H1 (cell line): ENCODE measurements at regions of chr3 and their contacts with region 1.

Region 1: GRCh38 chr3:38101811-38102443 is 35.0 kb downstream of the ACAA1 start:
- DNase-seq: no peak
- H3K4me3 ChIP-seq: no peak overlapping the region
- H3K27ac ChIP-seq: no peak overlapping the region
- H3K4me1 ChIP-seq: peaks cover 3 to 13% (median 5%) of the 10 kb centered on the region in 4 experiments; a peak in 6 of 7 replicates
- H3K27me3 ChIP-seq: peaks cover 0 to 2% (median 0%) of the 10 kb centered on the region in 4 experiments; a peak in 1 of 7 replicates
- CTCF ChIP-seq: no peak
- EP300 ChIP-seq: no peak
- POLR2A ChIP-seq: no peak
- RAD21 ChIP-seq: no peak

Region 2: GRCh38 chr3:37967260-37967881 is 134.6 kb before region 1 on chr3:
- CTCF ChIA-PET with region 1: no interaction called
- POLR2A ChIA-PET with region 1: no interaction called
- DNase-seq: peak; percentile 56 to 85
- H3K4me3 ChIP-seq: no peak overlapping the region
- H3K27ac ChIP-seq: no peak overlapping the region
- H3K4me1 ChIP-seq: peaks cover 0 to 7% (median 3%) of the 10 kb centered on the region in 4 experiments; a peak in 2 of 7 replicates
- H3K27me3 ChIP-seq: no peaks in the 10 kb centered on the region
- CTCF ChIP-seq: peak; percentile 91 to 98 (median 92)
- EP300 ChIP-seq: no peak
- POLR2A ChIP-seq: no peak
- RAD21 ChIP-seq: peak; percentile 84 to 90

Region 3: GRCh38 chr3:38117748-38118420 is 16.0 kb after region 1 on chr3:
- CTCF ChIA-PET with region 1: interaction called, 54 read pairs
- POLR2A ChIA-PET with region 1: interaction called, 20 read pairs
- DNase-seq: peak in 1 of 2 experiments; percentile 87
- H3K4me3 ChIP-seq: no peak overlapping the region
- H3K27ac ChIP-seq: no peak overlapping the region
- H3K4me1 ChIP-seq: no peaks in the 10 kb centered on the region
- H3K27me3 ChIP-seq: no peaks in the 10 kb centered on the region
- CTCF ChIP-seq: peak in 2 of 3 experiments; percentile 83 to 96; a peak in 3 of 4 replicates
- EP300 ChIP-seq: no peak
- POLR2A ChIP-seq: no peak; a peak in 1 of 3 replicates
- RAD21 ChIP-seq: peak; percentile 86 to 87

Region 4: DNA sequence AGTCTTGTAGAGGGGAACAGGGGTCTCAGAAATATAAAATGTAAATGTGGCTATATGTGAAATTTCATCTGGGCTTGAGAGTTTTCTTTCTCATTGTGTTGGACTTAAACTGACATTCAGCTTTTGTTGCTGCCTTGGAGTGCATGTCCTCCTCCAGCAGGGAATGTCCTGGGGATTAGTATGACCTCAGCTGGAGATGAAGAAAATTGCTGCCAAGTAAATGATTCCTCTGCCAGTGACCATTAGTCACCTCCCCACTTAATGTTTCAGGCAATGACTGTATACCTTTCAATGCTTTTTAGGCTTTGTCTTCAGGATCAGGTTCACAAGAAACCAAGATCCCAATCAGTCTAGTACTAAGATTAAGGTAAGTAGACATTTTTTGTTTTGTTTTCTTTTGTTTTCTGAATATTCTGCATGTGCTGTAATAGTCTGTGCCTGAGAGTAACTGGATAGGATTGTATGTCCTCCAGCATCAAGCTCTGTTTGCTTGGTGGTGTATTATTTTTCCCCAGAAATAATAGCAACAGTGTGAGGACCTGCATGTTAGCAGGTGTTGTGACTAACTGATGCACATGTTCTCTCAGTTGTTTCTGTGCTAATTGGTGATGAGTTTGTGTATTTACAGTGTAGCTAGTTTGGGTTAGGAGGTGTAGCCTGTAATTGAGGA is 145.6 kb after region 1 on chr3:
- CTCF ChIA-PET with region 1: no interaction called
- POLR2A ChIA-PET with region 1: no interaction called
- DNase-seq: no peak
- H3K4me3 ChIP-seq: no peak overlapping the region
- H3K27ac ChIP-seq: no peak overlapping the region
- H3K4me1 ChIP-seq: no peaks in the 10 kb centered on the region
- H3K27me3 ChIP-seq: no peaks in the 10 kb centered on the region
- CTCF ChIP-seq: no peak
- EP300 ChIP-seq: no peak
- POLR2A ChIP-seq: no peak
- RAD21 ChIP-seq: 0 out of 4 replicates have a peak, but pooled peaks of 1 of the 2 experiments have one; percentile 4